ENCODE measurements at regions of chr1 and their contacts with region 1.

Region 1: DNA sequence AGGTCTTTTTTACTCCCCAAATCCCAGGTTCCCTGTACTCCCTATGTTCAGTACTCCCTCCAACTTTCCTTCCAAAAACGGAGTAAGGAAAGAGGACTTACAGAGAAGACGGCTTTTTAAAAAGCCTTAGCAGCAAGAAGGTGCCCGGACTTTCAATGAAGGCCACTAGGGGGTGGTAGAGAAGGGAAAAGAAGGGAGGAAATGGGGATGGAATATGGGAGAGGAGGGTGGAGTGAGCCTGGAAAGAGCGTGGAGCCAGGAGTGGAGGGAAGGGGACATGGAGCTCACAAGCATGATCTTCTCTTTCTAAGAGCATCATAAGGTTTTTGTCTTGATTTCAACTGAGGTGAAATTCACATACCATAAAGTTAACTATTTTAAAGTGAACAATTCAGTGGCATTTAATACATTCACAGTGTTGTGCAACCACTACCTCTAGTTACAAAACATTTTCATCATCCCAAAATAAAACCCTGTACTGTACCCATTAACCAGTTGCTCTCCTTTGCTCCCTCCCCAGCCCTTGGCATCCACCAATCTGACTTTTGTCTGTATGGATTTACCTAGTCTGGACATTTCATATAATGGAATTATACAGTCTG is 129.9 kb downstream of the ZNF281 start:
- DNase-seq: no peak
- H3K4me3 ChIP-seq: no peak overlapping the region
- H3K27me3 ChIP-seq: no peaks in the 10 kb centered on the region
- CTCF ChIP-seq: peak; percentile 67

Region 2: GRCh38 chr1:200161817-200162216 is 118.1 kb before region 1 on chr1:
- CTCF ChIA-PET with region 1: no interaction called
- POLR2A ChIA-PET with region 1: no interaction called
- DNase-seq: no peak
- H3K4me3 ChIP-seq: no peak overlapping the region
- H3K27me3 ChIP-seq: no peaks in the 10 kb centered on the region
- CTCF ChIP-seq: no peak

Region 3: DNA sequence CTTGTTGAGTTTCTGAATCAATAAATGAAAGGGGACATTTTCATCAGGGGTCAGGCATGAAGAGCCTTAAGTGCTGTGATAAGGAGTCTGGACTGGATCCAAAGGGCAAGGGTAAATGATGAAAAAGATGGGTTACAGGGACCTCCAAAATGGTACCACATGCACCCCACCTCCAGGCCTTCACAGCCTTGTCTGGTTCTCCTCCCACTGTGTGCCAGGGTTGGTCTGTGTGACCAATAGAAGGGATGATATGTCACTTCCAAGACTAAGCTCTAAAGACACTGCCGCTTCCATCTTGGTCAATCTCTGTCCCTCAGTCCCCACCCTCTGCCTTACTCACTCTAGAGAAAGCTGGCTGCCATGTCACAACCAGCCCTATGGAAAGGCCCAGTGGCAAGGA is 10.7 kb before region 1 on chr1:
- CTCF ChIA-PET with region 1: interaction called, 13 read pairs
- POLR2A ChIA-PET with region 1: no interaction called
- DNase-seq: no peak
- H3K4me3 ChIP-seq: no peak overlapping the region
- H3K27me3 ChIP-seq: no peaks in the 10 kb centered on the region
- CTCF ChIP-seq: no peak

Region 4: GRCh38 chr1:200526709-200527612 is 247.1 kb after region 1 on chr1:
- CTCF ChIA-PET with region 1: no interaction called
- POLR2A ChIA-PET with region 1: no interaction called
- DNase-seq: no peak
- H3K4me3 ChIP-seq: no peak overlapping the region
- H3K27me3 ChIP-seq: no peaks in the 10 kb centered on the region; the same call in 1 of the 2 replicates
- CTCF ChIP-seq: no peak